ENCODE measurements at regions of chr2 and their contacts with region 1.

Region 1: GRCh38 chr2:9423100-9423921 is at the starts of genes CPSF3 and ITGB1BP1:
- DNase-seq: peak; percentile 97 to 98
- H3K4me3 ChIP-seq: peak within 1 kb of the TSS; percentile 80
- H3K27ac ChIP-seq: peak within 1 kb of the TSS; percentile 24
- H3K4me1 ChIP-seq: peaks cover 22% of the 10 kb centered on the region
- H3K27me3 ChIP-seq: no peaks in the 10 kb centered on the region
- CTCF ChIP-seq: no peak
- total RNA-seq, gene CPSF3: 52.0 and 61.5 TPM in 2 replicates
- total RNA-seq, gene ITGB1BP1: 68.1 and 82.5 TPM in 2 replicates

Region 2: GRCh38 chr2:9440058-9440727 is 16.9 kb after region 1 on chr2:
- CTCF ChIA-PET with region 1: no interaction called
- POLR2A ChIA-PET with region 1: no interaction called
- intact Hi-C with region 1: no loop called
- DNase-seq: no peak
- H3K4me3 ChIP-seq: no peak overlapping the region
- H3K27ac ChIP-seq: no peak overlapping the region
- H3K4me1 ChIP-seq: no peaks in the 10 kb centered on the region
- H3K27me3 ChIP-seq: no peaks in the 10 kb centered on the region
- CTCF ChIP-seq: no peak

Region 3: DNA sequence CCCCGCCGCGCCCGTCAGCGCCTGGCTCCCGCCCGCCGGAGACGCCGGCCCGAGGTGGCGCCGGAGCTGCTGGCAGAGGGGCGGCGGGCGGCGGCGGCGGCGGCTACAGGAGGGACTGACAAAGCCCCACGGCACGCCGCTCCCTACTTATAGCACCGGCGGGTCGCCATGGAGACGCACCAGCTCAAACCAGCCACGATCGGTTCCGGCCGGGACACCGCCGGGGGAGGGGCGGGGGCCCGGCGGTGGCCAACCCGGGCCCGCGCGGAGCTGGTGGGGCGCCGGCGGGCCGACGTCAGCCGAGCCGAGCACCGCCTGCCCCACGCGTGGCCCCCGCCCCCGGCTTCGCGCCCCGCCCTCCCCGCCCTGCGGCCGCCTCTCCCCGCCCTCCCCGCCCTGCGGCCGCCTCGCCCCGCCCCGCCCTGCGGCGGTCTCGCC is 1024.9 kb after region 1 on chr2 and contains the start of gene ODC1:
- CTCF ChIA-PET with region 1: no interaction called
- POLR2A ChIA-PET with region 1: no interaction called
- intact Hi-C with region 1: loop called (anchors 5 kb)
- DNase-seq: peak; percentile 75 to 93
- H3K4me3 ChIP-seq: peak within 1 kb of the TSS; percentile 75
- H3K27ac ChIP-seq: peak within 1 kb of the TSS; percentile 7
- H3K4me1 ChIP-seq: peaks cover 55% of the 10 kb centered on the region
- H3K27me3 ChIP-seq: no peaks in the 10 kb centered on the region
- CTCF ChIP-seq: no peak
- total RNA-seq, gene ODC1: 39.9 and 40.5 TPM in 2 replicates

Measured in PC-9 (cell line).